ENCODE measurements at regions of chr6 and their contacts with region 1.

Region 1: DNA sequence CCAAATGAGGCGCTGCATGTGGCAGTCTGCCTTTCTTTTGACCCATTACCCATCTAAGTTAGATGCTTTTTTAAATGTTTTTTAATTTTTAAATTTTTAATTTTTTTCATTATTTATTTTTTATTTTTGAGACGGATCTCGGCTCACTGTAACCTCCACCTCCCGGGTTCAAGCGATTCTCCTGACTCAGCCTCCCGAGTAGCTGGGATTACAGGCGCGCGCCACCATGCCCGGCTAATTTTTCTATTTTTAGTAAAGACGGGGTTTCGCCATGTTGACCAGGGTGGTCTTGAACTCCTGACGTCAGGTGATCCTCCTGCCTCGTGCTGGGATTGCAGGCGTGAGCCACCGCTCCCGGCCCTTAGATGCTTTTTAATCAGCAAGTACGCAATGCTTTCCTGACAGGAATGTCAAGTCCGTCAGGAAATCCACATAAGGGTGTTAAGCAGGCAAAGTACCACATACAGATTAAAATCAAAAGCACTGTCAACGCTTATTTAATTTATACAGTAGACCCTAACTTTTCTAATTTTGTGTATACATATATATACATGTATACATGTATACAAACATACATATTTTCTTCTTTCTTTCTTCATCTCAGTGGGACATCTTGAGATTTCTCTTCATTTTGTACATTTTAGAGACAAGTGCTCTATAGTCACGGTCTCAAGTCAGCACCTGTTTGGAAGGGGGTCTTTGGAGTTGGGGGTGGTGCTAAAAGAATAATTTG is 995 bp upstream of the GSTA4 start:
- DNase-seq: peak in 3 of 6 donors; percentile 31 to 66 (median 35)
- ATAC-seq: peak in 2 of 4 donors; percentile 0 to 4
- H3K4me3 ChIP-seq: peak overlapping the region in 1 of 4 donors; percentile 27
- H3K27ac ChIP-seq: peak overlapping the region in 2 of 4 donors; percentile 10 to 38
- H3K4me1 ChIP-seq: peaks cover 0 to 13% (median 8%) of the 10 kb centered on the region in 3 donors
- H3K27me3 ChIP-seq: no peaks in the 10 kb centered on the region
- CTCF ChIP-seq: no peak

Region 2: GRCh38 chr6:52877168-52877567 is 118.9 kb before region 1 on chr6:
- intact Hi-C with region 1: loop called in 1 of 3 experiments (anchors 10 kb)
- DNase-seq: no peak
- ATAC-seq: peak in 1 of 4 donors; percentile 30
- H3K4me3 ChIP-seq: no peak overlapping the region
- H3K27ac ChIP-seq: no peak overlapping the region
- H3K4me1 ChIP-seq: no peaks in the 10 kb centered on the region
- H3K27me3 ChIP-seq: no peaks in the 10 kb centered on the region
- CTCF ChIP-seq: no peak

Region 3: GRCh38 chr6:53128842-53129241 is 132.8 kb after region 1 on chr6:
- intact Hi-C with region 1: no loop called
- DNase-seq: no peak
- ATAC-seq: peak in 3 of 4 donors; percentile 64 to 84 (median 71)
- H3K4me3 ChIP-seq: no peak overlapping the region
- H3K27ac ChIP-seq: peak overlapping the region in 2 of 4 donors; percentile 50 to 53
- H3K4me1 ChIP-seq: no peaks in the 10 kb centered on the region
- H3K27me3 ChIP-seq: no peaks in the 10 kb centered on the region
- CTCF ChIP-seq: no peak

Measured in pancreas (tissue), 10 donors.